H1 (cell line): ENCODE measurements at regions of chr12 and their contacts with region 1.

Region 1: DNA sequence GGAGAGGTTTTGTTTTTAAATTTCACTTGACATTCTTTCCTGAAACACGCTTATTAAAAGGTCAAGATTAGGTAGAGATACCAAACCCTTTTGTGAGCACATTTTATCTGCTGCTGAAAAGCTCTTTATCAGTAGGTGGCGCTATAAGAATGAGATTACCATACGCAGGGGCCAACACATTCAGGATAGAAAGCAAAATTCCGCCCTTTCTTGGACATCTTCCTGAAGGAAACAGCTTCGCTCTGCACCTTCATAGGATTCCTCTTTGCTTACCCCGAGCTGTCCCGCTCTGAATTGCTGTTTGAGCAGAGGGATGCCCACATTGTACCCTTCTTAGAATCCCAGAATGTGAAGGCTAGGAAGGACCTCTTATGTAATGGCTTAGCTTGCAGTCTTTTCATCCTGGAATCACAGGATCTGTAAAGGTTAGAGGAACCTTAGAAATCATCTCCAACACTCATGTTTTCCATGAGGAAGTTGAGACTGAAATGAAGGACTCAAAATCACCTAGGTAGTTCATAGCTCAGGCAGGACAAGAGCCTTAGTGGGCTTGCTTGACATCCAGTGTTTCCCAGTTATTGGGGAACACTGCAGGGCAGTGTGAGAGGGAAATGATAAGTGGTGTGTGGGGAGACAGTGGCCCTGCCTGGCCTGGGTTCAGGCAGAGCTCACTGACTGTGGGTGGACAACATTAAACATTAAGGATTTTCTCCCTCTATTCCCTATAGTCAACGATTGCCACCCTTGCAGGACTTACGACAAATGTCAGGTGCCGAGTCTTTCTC is 38.7 kb upstream of the CRY1 start:
- DNase-seq: peak; percentile 7 to 50
- H3K4me3 ChIP-seq: no peak overlapping the region
- H3K27ac ChIP-seq: no peak overlapping the region
- H3K4me1 ChIP-seq: peaks cover 0 to 5% (median 1%) of the 10 kb centered on the region in 4 experiments; a peak in 2 of 7 replicates
- H3K27me3 ChIP-seq: no peaks in the 10 kb centered on the region
- CTCF ChIP-seq: peak in 2 of 3 experiments; percentile 76 to 78; a peak in 3 of 4 replicates
- EP300 ChIP-seq: no peak
- POLR2A ChIP-seq: no peak
- RAD21 ChIP-seq: peak; percentile 94 to 95

Region 2: GRCh38 chr12:107079172-107080011 is 52.6 kb before region 1 on chr12:
- CTCF ChIA-PET with region 1: no interaction called
- POLR2A ChIA-PET with region 1: no interaction called
- DNase-seq: no peak
- H3K4me3 ChIP-seq: no peak overlapping the region
- H3K27ac ChIP-seq: no peak overlapping the region
- H3K4me1 ChIP-seq: peaks cover 0 to 2% (median 0%) of the 10 kb centered on the region in 4 experiments; a peak in 2 of 7 replicates
- H3K27me3 ChIP-seq: no peaks in the 10 kb centered on the region
- CTCF ChIP-seq: peak in 2 of 3 experiments; percentile 30 to 55; a peak in 2 of 4 replicates
- EP300 ChIP-seq: no peak
- POLR2A ChIP-seq: no peak
- RAD21 ChIP-seq: peak; percentile 25 to 35; a peak in 3 of 4 replicates

Region 3: GRCh38 chr12:107283652-107284051 is 151.6 kb after region 1 on chr12:
- CTCF ChIA-PET with region 1: interaction called, 16 read pairs
- POLR2A ChIA-PET with region 1: no interaction called
- DNase-seq: no peak
- H3K4me3 ChIP-seq: no peak overlapping the region
- H3K27ac ChIP-seq: no peak overlapping the region
- H3K4me1 ChIP-seq: no peaks in the 10 kb centered on the region
- H3K27me3 ChIP-seq: no peaks in the 10 kb centered on the region
- CTCF ChIP-seq: no peak
- EP300 ChIP-seq: no peak
- POLR2A ChIP-seq: no peak
- RAD21 ChIP-seq: no peak

Region 4: GRCh38 chr12:107328442-107329133 is 196.6 kb after region 1 on chr12:
- CTCF ChIA-PET with region 1: interaction called, 94 read pairs
- POLR2A ChIA-PET with region 1: no interaction called
- DNase-seq: no peak
- H3K4me3 ChIP-seq: no peak overlapping the region
- H3K27ac ChIP-seq: no peak overlapping the region
- H3K4me1 ChIP-seq: peaks cover 0 to 8% (median 5%) of the 10 kb centered on the region in 4 experiments; a peak in 6 of 7 replicates
- H3K27me3 ChIP-seq: no peaks in the 10 kb centered on the region
- CTCF ChIP-seq: no peak
- EP300 ChIP-seq: no peak
- POLR2A ChIP-seq: no peak
- RAD21 ChIP-seq: no peak

Region 5: DNA sequence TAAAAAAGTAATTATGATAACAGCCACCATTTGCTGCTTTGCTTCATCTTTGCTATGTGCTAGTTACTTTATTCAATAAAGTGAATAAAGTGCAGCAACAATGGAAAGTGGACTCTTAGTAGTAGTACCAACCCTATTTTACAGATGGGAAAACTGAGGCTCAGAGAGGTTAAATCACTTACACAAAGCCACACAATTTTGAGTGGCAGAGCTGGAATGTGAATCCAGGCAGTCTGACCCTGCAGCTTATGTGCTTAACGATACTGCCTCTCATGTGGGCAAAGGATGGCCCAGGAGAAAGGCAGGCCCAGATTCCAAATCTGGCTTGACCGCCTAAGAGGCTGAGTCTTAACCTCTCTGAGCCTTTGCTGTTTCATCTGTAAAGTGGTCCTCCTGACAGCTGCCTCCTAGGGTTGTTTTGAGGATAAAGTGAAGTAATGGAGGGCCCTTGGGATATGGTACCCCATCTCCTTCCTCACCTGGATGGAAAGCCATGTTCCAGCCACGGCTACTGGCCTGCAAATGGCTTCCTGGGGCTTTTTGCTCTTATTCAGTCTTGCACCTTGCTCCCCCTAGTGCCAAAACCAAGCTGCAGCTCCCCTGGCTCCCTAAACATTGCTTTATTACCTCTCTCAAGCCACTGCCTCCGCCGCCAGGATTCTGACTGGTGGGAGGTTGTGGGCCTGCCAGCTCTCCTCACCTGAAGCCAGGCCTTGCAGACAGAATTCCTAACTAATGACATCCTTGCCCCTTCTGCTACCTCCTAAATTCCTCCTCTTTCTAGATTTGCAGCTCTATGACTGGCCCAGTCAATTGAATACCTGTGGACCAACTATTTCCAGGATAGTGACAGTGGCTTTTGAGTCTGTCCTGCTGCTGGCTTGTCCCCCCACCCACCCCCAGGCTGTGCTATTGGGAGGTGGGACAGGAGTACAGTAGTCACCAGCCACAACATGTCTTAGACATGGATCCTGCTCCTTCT is 270.3 kb after region 1 on chr12:
- CTCF ChIA-PET with region 1: interaction called, 193 read pairs
- POLR2A ChIA-PET with region 1: interaction called, 5 read pairs
- DNase-seq: peak; percentile 79 to 81
- H3K4me3 ChIP-seq: no peak overlapping the region; a peak in 1 of 8 replicates
- H3K27ac ChIP-seq: no peak overlapping the region
- H3K4me1 ChIP-seq: peaks cover 1 to 13% (median 8%) of the 10 kb centered on the region in 4 experiments; a peak in 4 of 7 replicates
- H3K27me3 ChIP-seq: no peaks in the 10 kb centered on the region; a peak in 1 of 7 replicates
- CTCF ChIP-seq: peak; percentile 73 to 89 (median 87)
- EP300 ChIP-seq: no peak
- POLR2A ChIP-seq: no peak
- RAD21 ChIP-seq: peak; percentile 80 to 89

Region 6: GRCh38 chr12:107607464-107608392 is 475.7 kb after region 1 on chr12:
- CTCF ChIA-PET with region 1: interaction called, 186 read pairs
- POLR2A ChIA-PET with region 1: no interaction called
- DNase-seq: peak; percentile 76 to 94
- H3K4me3 ChIP-seq: no peak overlapping the region
- H3K27ac ChIP-seq: no peak overlapping the region
- H3K4me1 ChIP-seq: peaks cover 6 to 16% (median 10%) of the 10 kb centered on the region in 4 experiments
- H3K27me3 ChIP-seq: 0 out of 7 replicates have a peak, but pooled peaks cover 0 to 2% (median 0%) of the 10 kb centered on the region in 4 experiments
- CTCF ChIP-seq: peak; percentile 82 to 98 (median 97)
- EP300 ChIP-seq: no peak
- POLR2A ChIP-seq: no peak
- RAD21 ChIP-seq: peak; percentile 98 to 99